ENCODE measurements at regions of chr12 and their contacts with region 1.

Region 1: DNA sequence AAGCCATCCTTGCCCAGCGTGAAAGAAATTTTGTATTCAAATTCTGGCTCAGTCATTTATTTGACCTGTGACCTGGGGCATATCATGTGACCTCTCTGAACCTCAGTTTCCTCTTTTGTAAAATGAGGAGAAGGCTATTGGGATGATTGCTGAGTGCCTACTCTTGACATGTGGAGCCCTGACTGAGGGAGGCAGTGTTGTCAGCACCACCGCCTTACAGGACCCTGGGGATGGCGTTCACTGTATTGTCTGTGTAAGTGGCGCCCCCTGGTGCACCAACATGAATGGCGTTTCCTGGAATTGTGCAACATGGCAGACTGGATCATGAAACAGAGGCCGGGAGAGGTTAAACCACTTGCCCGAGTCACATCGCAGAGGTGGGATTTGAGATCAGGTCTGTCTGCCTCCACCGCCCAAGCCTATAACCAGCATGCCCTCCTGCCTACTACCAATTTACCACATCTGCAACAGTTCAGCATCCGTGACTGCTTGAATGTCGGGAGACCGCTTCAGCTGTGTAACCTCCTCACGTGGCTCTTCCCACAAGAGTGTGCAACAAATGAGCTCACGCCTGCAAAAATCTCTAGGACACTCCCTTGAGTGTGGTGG is 20.1 kb upstream of the CCDC63 start:
- DNase-seq: peak; percentile 63 to 87
- H3K4me3 ChIP-seq: no peak overlapping the region
- H3K27ac ChIP-seq: no peak overlapping the region
- H3K4me1 ChIP-seq: no peaks in the 10 kb centered on the region
- H3K27me3 ChIP-seq: no peaks in the 10 kb centered on the region; the same call in 1 of the 2 replicates
- CTCF ChIP-seq: peak; percentile 93

Region 2: DNA sequence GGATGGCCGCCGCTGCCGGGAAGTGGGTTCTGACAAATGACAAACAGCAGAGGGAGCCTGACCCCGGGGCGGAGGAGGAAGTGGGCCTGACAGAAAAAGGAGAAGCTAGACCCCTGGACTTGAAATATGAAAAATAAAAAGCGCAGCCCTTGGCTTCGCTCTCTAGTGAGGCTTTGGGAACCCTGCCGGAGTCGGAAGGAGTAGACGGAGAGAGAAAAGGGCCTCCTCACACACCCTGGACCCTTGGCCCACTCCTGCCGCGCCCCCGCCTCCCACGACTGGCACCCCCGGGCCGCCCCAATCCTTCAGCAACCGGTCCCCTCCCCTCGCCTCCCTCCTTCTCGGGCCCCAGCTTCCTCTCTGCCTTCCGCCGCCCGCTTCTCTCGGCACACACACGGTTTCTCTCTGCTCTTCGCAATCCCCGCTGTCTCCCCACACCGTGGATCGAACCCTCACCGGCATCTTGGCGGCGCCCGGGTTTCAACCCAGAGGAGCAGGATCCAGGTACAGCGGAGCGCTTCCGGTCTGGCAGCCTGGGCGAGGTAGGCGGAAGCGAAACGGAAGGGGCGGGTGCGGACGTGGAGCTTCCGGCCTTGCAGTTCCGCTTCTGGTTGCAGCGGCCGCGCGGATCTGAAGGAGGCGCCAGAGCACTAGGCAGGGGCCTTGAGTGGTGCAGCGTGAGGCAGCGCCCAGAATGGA is 376.7 kb before region 1 on chr12 and contains the start of gene ARPC3:
- CTCF ChIA-PET with region 1: interaction called, 3 read pairs
- POLR2A ChIA-PET with region 1: no interaction called
- intact Hi-C with region 1: loop called (anchors 1 kb)
- DNase-seq: peak; percentile 90 to 93
- H3K4me3 ChIP-seq: peak within 1 kb of the TSS; percentile 94
- H3K27ac ChIP-seq: peak within 1 kb of the TSS; percentile 61
- H3K4me1 ChIP-seq: 0 out of 2 replicates have a peak, but pooled peaks cover 4% of the 10 kb centered on the region
- H3K27me3 ChIP-seq: no peaks in the 10 kb centered on the region
- CTCF ChIP-seq: peak; percentile 77
- total RNA-seq, gene ARPC3: 167 and 229 TPM in 2 replicates

Region 3: GRCh38 chr12:110555577-110556406 is 270.9 kb before region 1 on chr12:
- CTCF ChIA-PET with region 1: interaction called, 3 read pairs
- POLR2A ChIA-PET with region 1: no interaction called
- intact Hi-C with region 1: loop called (anchors 1 kb)
- DNase-seq: peak in 1 of 2 experiments; percentile 43
- H3K4me3 ChIP-seq: no peak overlapping the region
- H3K27ac ChIP-seq: peak overlapping the region; percentile 58
- H3K4me1 ChIP-seq: peaks cover 24% of the 10 kb centered on the region
- H3K27me3 ChIP-seq: no peaks in the 10 kb centered on the region
- CTCF ChIP-seq: no peak

Region 4: DNA sequence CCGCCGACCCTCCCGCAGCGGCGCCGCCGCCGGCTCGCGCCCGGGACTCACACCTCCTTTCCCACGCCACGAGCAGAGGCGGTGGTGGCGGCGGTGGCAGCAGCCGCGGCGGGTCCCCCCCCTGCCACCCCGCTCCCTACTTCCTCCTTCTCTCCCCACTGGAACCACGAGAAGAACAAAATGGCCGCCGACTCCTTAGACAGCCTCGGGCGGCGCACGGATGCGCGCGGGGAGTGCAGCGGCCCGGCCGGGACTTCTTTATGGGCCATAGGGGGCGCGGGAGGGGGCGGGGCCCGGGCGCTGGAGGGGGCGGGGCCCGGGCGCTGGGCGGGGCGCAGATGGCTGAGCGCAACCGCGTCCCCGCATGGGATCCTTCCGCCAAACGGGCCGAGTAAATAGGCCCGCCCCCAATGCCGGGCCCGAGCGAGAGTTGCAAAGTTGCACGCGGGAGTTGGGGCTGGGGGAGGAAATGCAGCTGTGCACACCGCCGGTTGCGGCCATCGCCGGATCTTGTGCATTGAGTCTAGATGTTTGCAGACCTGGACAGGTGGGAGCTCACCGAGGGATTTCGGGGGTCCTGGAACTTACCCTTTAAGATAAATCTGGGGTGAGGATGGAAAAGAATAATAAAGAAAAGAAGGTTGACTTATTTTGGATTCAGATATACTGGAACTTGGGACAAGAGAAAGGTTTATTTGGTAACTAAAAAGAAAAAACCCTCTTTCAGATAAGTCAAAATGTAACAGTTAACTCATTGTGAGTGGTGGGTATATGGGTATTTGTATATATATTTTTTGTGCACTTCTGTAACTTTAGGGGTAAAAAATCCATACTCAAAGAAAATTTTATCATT is 83.8 kb before region 1 on chr12 and contains the start of gene PPP1CC:
- CTCF ChIA-PET with region 1: no interaction called
- POLR2A ChIA-PET with region 1: interaction called, 3 read pairs
- intact Hi-C with region 1: loop called (anchors 1 kb)
- DNase-seq: peak; percentile 84 to 89
- H3K4me3 ChIP-seq: peak within 1 kb of the TSS; percentile 66
- H3K27ac ChIP-seq: peak within 1 kb of the TSS; percentile 70
- H3K4me1 ChIP-seq: peaks cover 48% of the 10 kb centered on the region
- H3K27me3 ChIP-seq: no peaks in the 10 kb centered on the region
- CTCF ChIP-seq: no peak
- total RNA-seq, gene PPP1CC: 149 and 170 TPM in 2 replicates

Region 5: GRCh38 chr12:110888256-110888991 is 61.7 kb after region 1 on chr12:
- CTCF ChIA-PET with region 1: no interaction called
- POLR2A ChIA-PET with region 1: no interaction called
- intact Hi-C with region 1: loop called (anchors 1 kb)
- DNase-seq: no peak
- H3K4me3 ChIP-seq: peak overlapping the region; percentile 65
- H3K27ac ChIP-seq: no peak overlapping the region
- H3K4me1 ChIP-seq: no peaks in the 10 kb centered on the region
- H3K27me3 ChIP-seq: peaks cover 3% of the 10 kb centered on the region; the same call in 1 of the 2 replicates
- CTCF ChIP-seq: peak; percentile 66; the same call in 1 of the 2 replicates

Region 6: DNA sequence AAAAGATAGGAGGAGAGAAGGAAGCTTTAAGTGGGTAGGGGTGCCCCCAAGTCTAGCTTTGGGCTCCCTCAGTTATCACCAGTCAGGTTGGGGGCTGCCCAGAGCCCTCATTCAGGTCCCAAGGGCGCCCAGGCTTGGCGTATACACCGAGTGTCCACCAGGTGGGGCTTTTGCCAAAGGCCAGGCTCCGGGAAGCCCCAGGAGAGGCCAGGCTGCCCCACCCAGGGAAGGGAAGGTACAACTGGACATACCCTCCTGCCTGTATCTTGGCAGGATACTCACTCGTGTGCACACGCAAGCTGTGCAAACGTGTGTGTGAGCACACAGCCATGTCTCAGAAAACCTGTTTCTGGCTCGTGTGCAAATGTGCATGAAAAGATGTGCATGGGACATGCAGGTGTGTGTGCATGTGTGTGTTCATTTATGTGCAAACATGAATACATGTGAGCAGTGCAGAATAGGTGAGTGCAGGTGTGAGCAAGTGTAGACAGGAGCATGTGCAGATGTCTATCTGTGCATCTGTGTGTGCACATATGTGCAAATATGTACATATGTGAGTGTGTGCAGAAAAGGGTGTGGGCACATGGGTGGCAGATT is 197.6 kb after region 1 on chr12:
- CTCF ChIA-PET with region 1: no interaction called
- POLR2A ChIA-PET with region 1: no interaction called
- intact Hi-C with region 1: no loop called
- DNase-seq: peak in 1 of 2 experiments; percentile 62
- H3K4me3 ChIP-seq: no peak overlapping the region
- H3K27ac ChIP-seq: no peak overlapping the region
- H3K4me1 ChIP-seq: no peaks in the 10 kb centered on the region
- H3K27me3 ChIP-seq: peaks cover 88% of the 10 kb centered on the region
- CTCF ChIP-seq: peak; percentile 89

Measured in PC-9 (cell line).